Activated CD4-positive, alpha-beta memory T cell treated with anti-CD3 and anti-CD28 coated beads, Interleukin-2, amount 10 ng/mL, durations not matched to agents 7 days and 5 days (primary cell): ENCODE measurements at regions of chr7 and their contacts with region 1.

Region 1: DNA sequence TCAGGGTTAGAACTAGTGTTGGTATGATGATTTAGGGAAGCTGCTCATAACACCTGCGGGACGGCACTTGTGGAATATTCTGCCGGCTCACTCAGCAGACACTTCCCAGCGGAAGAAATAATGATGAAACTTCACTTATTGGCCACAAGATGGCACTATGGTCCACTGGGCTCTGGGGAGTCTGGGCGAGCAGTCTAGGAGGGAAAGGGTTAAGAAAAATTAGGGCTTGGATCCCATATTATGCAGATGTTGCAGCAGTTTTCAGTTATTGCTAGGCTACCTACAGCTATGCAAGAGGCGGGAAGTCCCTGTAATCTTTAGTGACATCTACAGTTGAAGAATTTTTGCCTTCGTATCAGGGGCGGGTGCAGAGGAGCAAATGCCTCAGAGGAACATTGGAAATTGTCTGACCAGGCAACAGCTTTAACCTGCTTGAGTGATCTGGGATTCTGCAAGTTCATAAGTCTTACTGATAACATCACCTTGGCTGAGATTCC is 238.7 kb upstream of the PRSS58 start:
- DNase-seq: no peak
- H3K4me3 Mint-ChIP-seq: no peak overlapping the region
- H3K27ac Mint-ChIP-seq: no peak overlapping the region
- H3K4me1 Mint-ChIP-seq: peaks cover 29% of the 10 kb centered on the region
- H3K27me3 Mint-ChIP-seq: no peaks in the 10 kb centered on the region

Region 2: GRCh38 chr7:142485617-142486226 is 10.9 kb before region 1 on chr7:
- CTCF ChIA-PET with region 1: interaction called, 38 read pairs
- POLR2A ChIA-PET with region 1: no interaction called
- DNase-seq: peak; percentile 54
- H3K4me3 Mint-ChIP-seq: no peak overlapping the region
- H3K27ac Mint-ChIP-seq: no peak overlapping the region
- H3K4me1 Mint-ChIP-seq: peaks cover 31% of the 10 kb centered on the region
- H3K27me3 Mint-ChIP-seq: peaks cover 2% of the 10 kb centered on the region

Region 3: GRCh38 chr7:142516038-142516501 is 19.5 kb after region 1 on chr7:
- CTCF ChIA-PET with region 1: interaction called, 20 read pairs
- POLR2A ChIA-PET with region 1: interaction called, 4 read pairs
- DNase-seq: peak; percentile 42
- H3K4me3 Mint-ChIP-seq: no peak overlapping the region
- H3K27ac Mint-ChIP-seq: no peak overlapping the region
- H3K4me1 Mint-ChIP-seq: peaks cover 31% of the 10 kb centered on the region
- H3K27me3 Mint-ChIP-seq: peaks cover 6% of the 10 kb centered on the region

Region 4: DNA sequence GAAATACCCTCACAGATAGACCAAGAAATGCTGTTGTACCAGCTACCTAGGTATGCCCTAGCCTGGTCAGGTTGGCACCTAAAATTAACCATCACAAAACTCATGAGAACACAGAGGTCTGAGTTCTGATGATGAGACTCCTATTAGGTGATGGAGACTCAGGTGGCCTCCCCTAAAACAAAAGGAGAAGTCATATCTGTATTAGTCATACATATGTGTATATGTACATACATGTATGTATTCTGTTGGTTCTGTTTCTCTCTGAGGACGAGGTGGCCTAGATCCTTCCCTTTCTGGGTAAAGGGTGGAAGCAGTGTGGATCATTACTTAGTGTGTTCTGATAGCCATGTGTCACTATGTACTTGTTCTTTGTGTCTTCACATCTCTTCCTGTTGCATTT is 45.5 kb after region 1 on chr7:
- CTCF ChIA-PET with region 1: no interaction called
- POLR2A ChIA-PET with region 1: no interaction called
- DNase-seq: no peak
- H3K4me3 Mint-ChIP-seq: no peak overlapping the region
- H3K27ac Mint-ChIP-seq: no peak overlapping the region
- H3K4me1 Mint-ChIP-seq: peaks cover 16% of the 10 kb centered on the region
- H3K27me3 Mint-ChIP-seq: no peaks in the 10 kb centered on the region